Activated T-helper 1 cell treated with anti-CD3 and anti-CD28 coated beads, Interleukin-12 subunit alpha, Interleukin-12 subunit beta, Interleukin-2, Interleukin-4 antibody, amounts not matched to agents 30 ng/mL and 10 ng/mL and 1 ng/mL, durations not matched to agents 14 hours and 24 hours and 36 hours (primary cell): ENCODE measurements at regions of chr18 and their contacts with region 1.

Region 1: DNA sequence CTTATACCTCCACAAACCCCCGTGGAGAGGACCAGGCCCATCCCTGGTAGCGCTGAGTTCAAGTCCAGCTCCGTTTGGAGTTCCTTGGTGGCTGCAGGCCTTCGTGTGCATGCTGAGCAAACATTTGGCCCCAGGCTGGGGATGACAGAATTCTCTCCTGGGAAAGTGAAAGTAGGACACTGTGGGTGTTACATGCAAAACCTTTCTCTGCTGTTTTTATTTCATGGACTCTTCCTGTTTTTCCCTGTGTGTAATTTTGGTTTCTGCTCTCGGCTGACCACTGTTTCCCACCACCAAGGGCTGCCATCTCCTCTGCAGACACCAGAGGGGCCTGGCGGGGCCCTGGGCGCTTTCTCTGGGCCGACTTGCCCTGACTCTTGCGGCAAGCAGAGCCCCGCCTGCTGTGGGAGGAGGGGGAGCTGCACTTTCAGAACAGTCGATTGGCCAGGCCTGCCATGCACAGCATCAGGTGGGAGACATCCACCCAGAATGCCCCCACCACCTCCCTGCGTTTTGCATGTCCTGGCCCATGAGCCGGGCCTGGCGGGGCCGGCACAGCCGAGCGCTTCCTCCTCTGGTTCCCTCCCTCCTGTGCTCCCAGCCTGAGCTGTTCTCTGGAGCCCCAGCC is 102.4 kb downstream of the CABLES1 start:
- DNase-seq: peak; percentile 28
- H3K4me3 Mint-ChIP-seq: peak overlapping the region; percentile 62
- H3K27ac Mint-ChIP-seq: peak overlapping the region; percentile 71
- H3K4me1 Mint-ChIP-seq: peaks cover 44% of the 10 kb centered on the region
- H3K27me3 Mint-ChIP-seq: peaks cover 5% of the 10 kb centered on the region

Region 2: DNA sequence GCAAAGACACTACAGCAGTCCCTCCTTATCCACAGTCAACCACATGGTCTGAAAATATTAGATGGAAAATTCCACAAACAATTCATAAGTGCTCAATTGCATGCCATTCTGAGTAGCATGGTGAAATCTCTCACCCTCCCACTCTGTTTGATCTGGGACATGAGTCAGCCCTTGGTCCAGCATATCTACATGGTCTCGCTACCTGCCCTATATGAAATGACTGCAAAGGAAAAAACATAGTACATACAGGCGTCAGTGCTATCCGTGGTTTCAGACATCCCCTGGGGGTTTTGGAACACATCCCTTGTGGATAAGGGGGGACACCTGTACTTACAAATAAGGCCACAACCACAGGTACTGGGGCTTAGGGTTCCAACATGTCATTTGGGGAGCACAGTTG is 28.6 kb before region 1 on chr18:
- intact Hi-C with region 1: loop called (anchors 1 kb)
- DNase-seq: no peak
- H3K4me3 Mint-ChIP-seq: no peak overlapping the region
- H3K27ac Mint-ChIP-seq: peak overlapping the region; percentile 68
- H3K4me1 Mint-ChIP-seq: peaks cover 6% of the 10 kb centered on the region
- H3K27me3 Mint-ChIP-seq: no peaks in the 10 kb centered on the region